PC-9 (cell line): ENCODE measurements at regions of chr12 and their contacts with region 1.

Region 1: DNA sequence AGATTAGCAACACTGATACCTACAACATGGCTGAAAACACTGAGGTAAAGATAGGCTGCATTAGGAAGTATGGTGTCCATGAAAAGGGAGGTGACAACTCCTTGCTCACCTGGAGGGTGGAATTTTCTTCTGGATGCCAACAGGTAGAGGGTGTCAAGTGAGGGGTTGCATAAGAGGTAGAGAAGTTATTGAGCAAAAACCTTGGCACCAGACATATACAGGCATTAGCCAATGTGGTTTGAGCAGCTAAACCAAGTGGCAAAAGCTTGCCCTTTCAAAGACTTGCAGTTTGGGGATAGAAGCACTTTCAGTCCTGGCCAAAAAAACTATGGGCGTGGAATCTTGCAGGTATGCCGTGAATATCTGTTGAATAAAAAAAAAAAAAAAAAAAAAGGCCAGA is 3.8 kb downstream of the RITA1 start:
- DNase-seq: peak in 1 of 2 experiments; percentile 80
- H3K4me3 ChIP-seq: no peak overlapping the region
- H3K27ac ChIP-seq: 0 out of 2 replicates have a peak overlapping the region, but pooled peaks have one; percentile 12
- H3K4me1 ChIP-seq: peaks cover 33% of the 10 kb centered on the region
- H3K27me3 ChIP-seq: no peaks in the 10 kb centered on the region
- CTCF ChIP-seq: no peak

Region 2: DNA sequence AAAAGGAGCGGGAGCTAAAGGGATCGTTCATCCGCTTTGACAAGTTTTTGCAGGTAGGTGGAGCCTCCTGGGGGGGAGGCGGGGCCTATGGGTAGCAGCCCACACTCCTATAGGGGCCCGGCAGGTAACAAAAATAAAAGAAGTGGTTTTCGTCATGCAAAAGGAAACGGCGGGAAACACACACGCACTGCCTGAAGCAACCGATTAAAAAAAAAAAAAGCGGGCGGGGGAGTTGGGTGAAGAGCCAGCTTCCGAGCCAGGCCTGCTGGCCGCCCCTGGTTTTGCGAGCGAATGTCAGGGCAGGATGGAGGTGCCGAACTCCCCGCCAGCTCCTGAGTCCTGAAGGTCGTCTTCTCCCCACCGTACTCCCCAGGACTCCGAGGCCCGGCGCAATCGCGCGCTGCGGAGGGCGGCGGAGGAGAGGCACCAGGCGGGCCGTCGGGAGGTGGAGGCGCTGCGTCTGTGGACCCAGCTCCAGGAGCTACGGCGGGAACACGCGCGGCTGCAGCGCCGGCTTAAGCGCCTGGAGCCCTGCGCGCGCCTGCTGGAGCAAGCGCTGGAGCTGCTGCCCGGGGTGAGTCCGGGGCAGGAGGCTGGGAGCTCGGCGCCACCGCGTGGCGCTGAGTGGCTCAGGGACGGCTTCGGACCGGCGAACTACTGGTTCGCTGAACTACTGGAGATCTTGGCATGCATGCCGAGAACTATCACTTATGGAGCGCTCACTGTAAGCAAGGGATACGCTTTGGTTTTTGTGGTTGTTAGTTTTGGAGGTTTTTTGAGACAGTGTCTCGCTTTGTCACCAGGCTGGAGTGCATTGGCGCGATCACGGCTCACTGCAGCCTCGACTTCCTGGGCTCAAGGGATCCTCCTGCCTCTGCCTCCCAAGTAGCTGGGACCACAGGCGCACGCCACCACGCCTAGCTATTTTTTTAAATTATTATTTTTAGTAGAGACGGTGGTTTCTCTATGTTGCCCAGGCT is 36.2 kb before region 1 on chr12:
- CTCF ChIA-PET with region 1: no interaction called
- POLR2A ChIA-PET with region 1: no interaction called
- intact Hi-C with region 1: no loop called
- DNase-seq: peak; percentile 67 to 81
- H3K4me3 ChIP-seq: peak overlapping the region; percentile 61
- H3K27ac ChIP-seq: no peak overlapping the region
- H3K4me1 ChIP-seq: peaks cover 18% of the 10 kb centered on the region; the same call in 1 of the 2 replicates
- H3K27me3 ChIP-seq: no peaks in the 10 kb centered on the region
- CTCF ChIP-seq: peak; percentile 56

Region 3: DNA sequence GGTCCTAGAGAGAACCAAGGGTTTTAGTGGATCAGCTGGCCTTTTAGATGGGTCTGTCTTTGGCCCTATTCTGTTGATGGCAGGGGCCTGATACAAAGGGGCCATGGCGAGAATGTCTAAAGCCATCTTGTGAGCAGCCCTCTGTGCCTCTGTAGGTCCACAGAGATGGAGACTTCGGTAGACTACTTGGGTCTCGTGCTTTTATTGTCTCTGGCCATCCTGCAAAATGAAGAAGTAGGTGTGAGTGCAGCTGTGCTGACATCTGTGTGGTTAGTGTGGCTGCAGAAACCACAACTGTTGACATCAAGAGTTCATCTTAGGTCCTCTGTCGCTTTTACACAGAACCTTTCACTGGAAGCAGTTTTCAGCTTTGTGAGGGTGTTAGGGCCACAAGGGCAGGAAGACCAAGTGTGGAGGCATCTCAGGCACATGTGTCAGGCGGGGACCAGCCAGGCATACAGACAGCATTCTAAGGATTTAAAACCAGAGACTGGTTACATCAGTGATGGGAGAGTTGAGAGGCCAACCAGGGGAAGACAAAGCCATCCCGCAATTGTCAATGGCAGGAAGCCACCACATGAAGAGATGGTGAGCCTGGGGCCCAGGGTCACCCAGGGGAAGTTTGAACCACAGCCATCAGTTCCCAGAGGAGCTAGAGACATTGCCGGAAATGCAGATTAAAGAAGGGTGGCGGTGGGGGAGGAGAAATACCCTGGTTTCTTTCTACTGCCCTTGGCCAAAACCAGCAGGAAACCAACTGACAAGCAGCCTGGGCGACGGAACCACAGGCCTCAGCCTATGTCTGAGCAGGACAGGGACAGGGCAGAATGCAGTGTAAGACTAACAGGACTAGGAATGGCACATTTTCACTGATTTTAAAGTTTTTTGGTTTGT is 18.9 kb after region 1 on chr12:
- CTCF ChIA-PET with region 1: interaction called, 4 read pairs
- POLR2A ChIA-PET with region 1: interaction called, 32 read pairs
- intact Hi-C with region 1: no loop called
- DNase-seq: no peak
- H3K4me3 ChIP-seq: no peak overlapping the region
- H3K27ac ChIP-seq: no peak overlapping the region
- H3K4me1 ChIP-seq: peaks cover 12% of the 10 kb centered on the region
- H3K27me3 ChIP-seq: no peaks in the 10 kb centered on the region
- CTCF ChIP-seq: no peak

Region 4: GRCh38 chr12:113285679-113286610 is 96.6 kb after region 1 on chr12:
- CTCF ChIA-PET with region 1: no interaction called
- POLR2A ChIA-PET with region 1: no interaction called
- intact Hi-C with region 1: no loop called
- DNase-seq: no peak
- H3K4me3 ChIP-seq: no peak overlapping the region
- H3K27ac ChIP-seq: no peak overlapping the region
- H3K4me1 ChIP-seq: no peaks in the 10 kb centered on the region
- H3K27me3 ChIP-seq: no peaks in the 10 kb centered on the region
- CTCF ChIP-seq: no peak

Region 5: DNA sequence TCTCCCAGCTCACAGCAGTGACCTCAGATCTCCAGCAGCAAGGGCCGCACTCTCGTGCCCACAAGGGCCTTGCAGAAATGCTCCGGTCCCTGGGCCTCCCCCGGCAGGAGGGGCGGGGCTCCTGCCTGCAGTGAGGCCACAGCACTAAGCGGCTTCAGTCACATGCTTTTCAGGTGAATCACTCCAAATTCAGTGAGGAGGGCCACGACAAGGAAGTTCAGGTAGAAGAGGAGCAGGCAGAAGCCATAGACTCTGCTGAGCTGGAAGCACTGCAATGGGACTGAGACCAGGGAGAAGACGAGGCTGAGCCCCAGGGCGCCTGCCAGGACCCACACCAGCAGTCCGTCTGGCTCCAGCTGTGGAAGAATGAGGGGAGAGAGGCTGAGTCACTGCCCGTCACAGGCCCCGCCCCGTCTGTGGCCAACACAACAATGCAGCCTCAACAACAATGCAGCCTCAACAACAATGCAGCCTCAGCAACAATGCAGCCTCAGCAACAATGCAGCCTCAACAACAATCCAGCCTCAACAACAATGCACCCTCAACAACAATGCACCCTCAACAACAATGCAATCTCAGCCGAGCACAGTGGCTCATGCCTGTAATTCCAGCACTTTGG is 110.4 kb after region 1 on chr12:
- CTCF ChIA-PET with region 1: interaction called, 12 read pairs
- POLR2A ChIA-PET with region 1: no interaction called
- intact Hi-C with region 1: no loop called
- DNase-seq: peak; percentile 87 to 96
- H3K4me3 ChIP-seq: no peak overlapping the region
- H3K27ac ChIP-seq: peak overlapping the region; percentile 62
- H3K4me1 ChIP-seq: peaks cover 19% of the 10 kb centered on the region
- H3K27me3 ChIP-seq: no peaks in the 10 kb centered on the region
- CTCF ChIP-seq: no peak